ENCODE measurements at regions of chr20 and their contacts with region 1.

Region 1: GRCh38 chr20:34111702-34112599 is at the start of gene EIF2S2:
- DNase-seq: peak; percentile 100
- H3K4me3 ChIP-seq: peak within 1 kb of the TSS; percentile 98
- H3K4me3 Mint-ChIP-seq: peak within 1 kb of the TSS; percentile 77
- H3K27ac Mint-ChIP-seq: peak within 1 kb of the TSS; percentile 99
- H3K4me1 ChIP-seq: peaks cover 8% of the 10 kb centered on the region
- H3K4me1 Mint-ChIP-seq: peaks cover 37% of the 10 kb centered on the region
- H3K27me3 ChIP-seq: no peaks in the 10 kb centered on the region
- H3K27me3 Mint-ChIP-seq: no peaks in the 10 kb centered on the region
- CTCF ChIP-seq: no peak
- total RNA-seq, gene EIF2S2: 291 and 299 TPM in 2 replicates

Region 2: DNA sequence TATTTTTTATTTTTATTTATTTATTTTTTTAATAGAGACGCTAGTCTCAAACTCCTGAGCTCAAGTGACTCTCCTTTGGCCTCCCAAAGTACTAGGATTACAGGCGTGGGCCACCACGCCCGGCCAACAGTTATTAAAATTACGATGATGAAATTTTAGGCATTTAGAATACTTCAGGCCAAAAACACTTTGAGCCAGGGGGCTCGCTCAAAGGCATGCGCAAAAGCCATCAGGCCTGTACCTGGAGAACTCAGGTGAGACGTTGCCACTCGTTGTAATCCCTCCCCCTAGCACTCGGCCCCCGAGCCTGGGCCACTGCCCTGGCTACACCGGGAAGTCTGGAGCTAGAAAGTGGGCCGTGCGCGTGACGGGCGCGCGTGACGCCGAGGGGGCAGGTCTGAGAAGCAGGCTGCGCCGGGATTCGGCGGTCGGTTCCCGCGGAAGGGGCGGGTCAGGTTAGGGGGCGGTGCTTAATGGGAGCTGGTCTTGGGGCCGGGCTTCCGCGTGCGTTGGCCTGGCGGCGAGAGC is 622.4 kb before region 1 on chr20:
- CTCF ChIA-PET with region 1: no interaction called
- POLR2A ChIA-PET with region 1: interaction called, 16 read pairs
- intact Hi-C with region 1: no loop called
- DNase-seq: peak; percentile 100
- H3K4me3 ChIP-seq: peak overlapping the region; percentile 16
- H3K4me3 Mint-ChIP-seq: peak overlapping the region; percentile 92
- H3K27ac Mint-ChIP-seq: peak overlapping the region; percentile 38
- H3K4me1 ChIP-seq: peaks cover 14% of the 10 kb centered on the region
- H3K4me1 Mint-ChIP-seq: peaks cover 8% of the 10 kb centered on the region
- H3K27me3 ChIP-seq: no peaks in the 10 kb centered on the region
- H3K27me3 Mint-ChIP-seq: no peaks in the 10 kb centered on the region
- CTCF ChIP-seq: no peak

Region 3: GRCh38 chr20:33719989-33720709 is 391.8 kb before region 1 on chr20 and contains the start of gene PXMP4:
- CTCF ChIA-PET with region 1: no interaction called
- POLR2A ChIA-PET with region 1: interaction called, 12 read pairs
- intact Hi-C with region 1: loop called (anchors 5 kb)
- DNase-seq: peak; percentile 99 to 100
- H3K4me3 ChIP-seq: peak within 1 kb of the TSS; percentile 65
- H3K4me3 Mint-ChIP-seq: peak within 1 kb of the TSS; percentile 71
- H3K27ac Mint-ChIP-seq: peak within 1 kb of the TSS; percentile 33
- H3K4me1 ChIP-seq: peaks cover 22% of the 10 kb centered on the region
- H3K4me1 Mint-ChIP-seq: no peaks in the 10 kb centered on the region
- H3K27me3 ChIP-seq: no peaks in the 10 kb centered on the region
- H3K27me3 Mint-ChIP-seq: no peaks in the 10 kb centered on the region
- CTCF ChIP-seq: no peak
- total RNA-seq, gene PXMP4: 37.3 and 39.5 TPM in 2 replicates

Region 4: DNA sequence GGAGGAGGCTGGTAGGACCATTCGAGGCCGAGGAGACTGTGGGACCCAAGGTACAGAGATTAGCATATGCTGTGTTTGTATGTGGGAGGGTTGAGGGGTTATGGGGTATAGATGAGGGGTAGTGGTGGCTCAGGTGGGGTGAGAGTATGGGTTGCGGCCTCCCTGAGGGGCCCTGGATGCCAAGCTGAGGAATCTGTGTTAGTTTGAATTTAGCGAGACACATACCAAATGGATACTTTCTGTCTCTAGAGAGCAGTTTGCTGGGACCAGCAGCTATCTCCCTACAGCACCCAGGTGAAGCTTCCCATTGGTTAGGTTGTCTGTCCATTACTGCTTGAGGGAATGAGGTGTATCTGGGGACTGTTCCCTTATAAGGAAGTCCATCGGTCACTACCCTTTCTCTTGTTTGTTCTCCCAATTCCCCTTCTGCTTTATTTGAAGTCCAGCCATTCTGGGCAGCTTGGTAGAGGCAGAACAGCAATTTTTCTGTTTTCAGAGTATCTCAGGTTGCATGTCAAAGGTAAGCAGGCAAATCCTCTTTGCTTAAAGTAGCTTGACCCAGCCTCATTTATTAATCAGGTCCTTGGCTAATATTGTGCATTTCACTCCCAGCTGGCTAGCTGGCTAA is 285.6 kb before region 1 on chr20:
- CTCF ChIA-PET with region 1: no interaction called
- POLR2A ChIA-PET with region 1: interaction called, 19 read pairs
- intact Hi-C with region 1: no loop called
- DNase-seq: peak; percentile 92 to 94
- H3K4me3 ChIP-seq: peak overlapping the region; percentile 1; the same call in 1 of the 2 replicates
- H3K4me3 Mint-ChIP-seq: peak overlapping the region; percentile 43
- H3K27ac Mint-ChIP-seq: peak overlapping the region; percentile 80
- H3K4me1 ChIP-seq: peaks cover 55% of the 10 kb centered on the region
- H3K4me1 Mint-ChIP-seq: peaks cover 58% of the 10 kb centered on the region
- H3K27me3 ChIP-seq: no peaks in the 10 kb centered on the region
- H3K27me3 Mint-ChIP-seq: no peaks in the 10 kb centered on the region
- CTCF ChIP-seq: no peak

Region 5: DNA sequence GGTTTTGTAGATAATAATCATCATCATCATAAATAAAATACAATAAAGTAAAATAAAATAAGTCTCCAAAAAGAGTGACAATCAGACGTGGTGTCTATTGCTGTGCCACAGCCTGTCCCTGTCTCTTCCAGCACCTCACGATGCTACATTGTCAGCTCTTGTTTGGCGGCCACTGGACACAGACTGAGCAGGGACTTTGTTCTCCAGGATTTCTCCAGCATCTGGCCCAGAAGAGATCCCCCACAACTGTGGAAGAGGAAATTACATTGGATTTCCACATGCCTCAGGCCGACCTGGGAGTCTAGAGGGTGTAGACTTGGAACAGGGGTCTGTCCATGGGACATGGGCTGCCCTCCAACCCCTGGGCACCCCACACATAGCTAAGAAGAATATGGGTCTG is 157.4 kb before region 1 on chr20:
- CTCF ChIA-PET with region 1: no interaction called
- POLR2A ChIA-PET with region 1: interaction called, 10 read pairs
- intact Hi-C with region 1: no loop called
- DNase-seq: peak in 1 of 2 experiments; percentile 16
- H3K4me3 ChIP-seq: no peak overlapping the region
- H3K4me3 Mint-ChIP-seq: no peak overlapping the region
- H3K27ac Mint-ChIP-seq: no peak overlapping the region
- H3K4me1 ChIP-seq: no peaks in the 10 kb centered on the region
- H3K4me1 Mint-ChIP-seq: no peaks in the 10 kb centered on the region
- H3K27me3 ChIP-seq: no peaks in the 10 kb centered on the region
- H3K27me3 Mint-ChIP-seq: peaks cover 6% of the 10 kb centered on the region
- CTCF ChIP-seq: no peak

Region 6: DNA sequence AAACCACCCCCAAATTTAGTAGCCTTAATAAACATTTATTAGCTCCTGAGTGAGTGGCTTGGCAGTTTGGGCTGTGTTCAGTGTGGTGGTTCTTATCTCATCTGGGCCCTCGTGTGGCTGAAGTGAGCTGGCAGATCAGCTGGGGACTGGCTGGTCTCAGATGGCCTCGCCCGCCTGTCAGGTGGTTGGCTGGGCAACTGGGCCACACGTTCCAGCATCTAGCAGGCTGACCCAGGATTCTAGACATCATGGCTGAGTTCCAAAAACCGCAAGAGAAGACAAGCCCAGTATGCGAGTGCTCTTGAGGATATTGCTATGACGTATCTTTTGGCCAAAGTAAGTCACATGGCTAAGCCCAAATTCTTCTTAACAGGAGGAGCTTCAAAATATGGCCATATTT is 28.8 kb before region 1 on chr20:
- CTCF ChIA-PET with region 1: no interaction called
- POLR2A ChIA-PET with region 1: interaction called, 14 read pairs
- intact Hi-C with region 1: no loop called
- DNase-seq: peak in 1 of 2 experiments; percentile 46
- H3K4me3 ChIP-seq: no peak overlapping the region
- H3K4me3 Mint-ChIP-seq: no peak overlapping the region
- H3K27ac Mint-ChIP-seq: no peak overlapping the region
- H3K4me1 ChIP-seq: no peaks in the 10 kb centered on the region
- H3K4me1 Mint-ChIP-seq: no peaks in the 10 kb centered on the region
- H3K27me3 ChIP-seq: no peaks in the 10 kb centered on the region
- H3K27me3 Mint-ChIP-seq: no peaks in the 10 kb centered on the region
- CTCF ChIP-seq: peak in 1 of 2 experiments; percentile 1

Region 7: DNA sequence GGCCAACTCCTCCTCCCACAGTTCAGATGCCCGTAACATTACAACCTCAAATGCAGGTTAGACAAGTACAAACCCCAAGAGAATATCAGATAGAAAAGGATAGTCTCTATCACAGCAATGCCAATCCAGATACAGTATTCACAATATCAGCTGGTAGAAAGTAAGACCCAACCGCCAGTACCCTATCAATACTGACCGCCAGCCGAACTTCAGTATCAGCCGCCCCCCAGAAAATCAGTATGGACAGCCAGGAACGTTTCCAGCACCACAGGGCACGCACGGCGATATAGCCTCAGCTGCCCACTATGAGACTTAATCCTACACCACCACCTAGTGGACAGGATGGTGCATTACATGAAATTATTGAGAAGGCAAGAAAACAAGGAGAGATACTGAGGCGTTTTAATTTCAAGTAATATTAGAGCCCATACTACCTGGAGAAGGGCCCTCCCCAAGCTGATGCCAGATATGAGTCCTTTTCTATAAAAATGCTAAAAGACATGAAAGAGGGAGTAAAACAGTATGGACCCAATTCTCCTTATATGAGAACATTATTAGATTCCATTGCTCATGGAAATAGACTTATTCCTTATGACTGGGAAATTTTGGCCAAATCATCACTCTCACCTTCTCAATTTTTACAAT is 17.7 kb after region 1 on chr20:
- CTCF ChIA-PET with region 1: interaction called, 15 read pairs
- POLR2A ChIA-PET with region 1: interaction called, 8 read pairs
- intact Hi-C with region 1: loop called (anchors 1 kb)
- DNase-seq: peak; percentile 83 to 91
- H3K4me3 ChIP-seq: peak overlapping the region; percentile 7; the same call in 1 of the 2 replicates
- H3K4me3 Mint-ChIP-seq: peak overlapping the region; percentile 41
- H3K27ac Mint-ChIP-seq: no peak overlapping the region
- H3K4me1 ChIP-seq: peaks cover 20% of the 10 kb centered on the region
- H3K4me1 Mint-ChIP-seq: peaks cover 26% of the 10 kb centered on the region
- H3K27me3 ChIP-seq: no peaks in the 10 kb centered on the region
- H3K27me3 Mint-ChIP-seq: peaks cover 3% of the 10 kb centered on the region
- CTCF ChIP-seq: peak; percentile 96 to 98

Measured in Caco-2 (cell line).